HCT116 (cell line): ENCODE measurements at regions of chr13 and their contacts with region 1.

Region 1: DNA sequence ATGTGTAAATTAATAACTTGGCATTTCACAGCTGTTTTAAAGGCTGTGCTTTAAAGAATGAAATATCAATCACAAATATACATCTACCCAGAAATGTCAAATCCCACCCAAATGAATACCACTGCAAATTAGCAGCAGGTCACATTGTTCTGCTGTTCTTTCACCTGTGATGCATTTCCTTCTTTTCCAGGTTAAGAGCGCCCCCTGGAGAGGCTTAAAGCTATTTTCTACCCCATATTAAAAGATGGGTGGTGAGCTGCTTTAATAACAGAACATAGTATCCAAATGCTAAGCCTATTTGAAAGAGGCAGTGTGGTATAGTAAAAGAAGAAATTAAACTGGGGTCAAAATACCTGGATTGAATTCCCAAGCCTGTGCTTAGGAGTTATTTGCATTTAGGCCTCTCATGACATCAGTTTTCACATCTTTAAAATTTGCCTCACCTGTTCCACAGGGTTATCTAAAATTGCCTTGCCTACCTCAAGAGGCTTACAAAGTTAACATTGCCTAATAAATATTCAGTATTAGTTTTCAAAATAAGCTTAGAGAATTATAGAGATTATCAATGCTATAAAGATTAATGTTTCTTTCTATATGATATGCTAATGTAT is 396.9 kb upstream of the SLITRK5 start:
- DNase-seq: peak; percentile 39
- ATAC-seq: peak; percentile 70
- H3K4me3 ChIP-seq: no peak overlapping the region
- H3K27ac ChIP-seq: no peak overlapping the region
- H3K4me1 ChIP-seq: no peaks in the 10 kb centered on the region
- H3K27me3 ChIP-seq: no peaks in the 10 kb centered on the region
- CTCF ChIP-seq: peak; percentile 32 to 57 (median 56); a peak in 5 of 6 replicates
- POLR2A ChIP-seq: no peak
- RAD21 ChIP-seq: peak; percentile 60

Region 2: DNA sequence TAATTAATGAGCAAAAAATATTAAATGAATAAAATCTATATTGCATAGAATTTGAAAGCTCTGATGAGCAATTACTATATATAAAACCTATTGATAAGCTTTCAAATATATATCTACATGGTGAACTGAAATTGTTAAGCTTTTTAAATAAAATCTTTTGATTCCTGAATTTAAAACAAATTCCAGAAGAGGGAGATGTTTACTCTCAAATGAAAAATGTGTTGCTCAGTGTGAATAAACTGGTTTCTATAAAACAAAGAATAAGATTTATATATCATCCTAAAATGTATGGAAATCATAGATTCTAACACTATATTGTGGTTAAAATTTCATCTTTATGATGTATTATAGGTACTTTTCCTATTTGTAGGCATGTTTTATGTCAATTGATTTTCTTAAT is 1303.6 kb before region 1 on chr13:
- CTCF ChIA-PET with region 1: no interaction called
- POLR2A ChIA-PET with region 1: no interaction called
- RAD21 ChIA-PET with region 1: no interaction called
- intact Hi-C with region 1: loop called (anchors 10 kb)
- DNase-seq: no peak
- ATAC-seq: no peak
- H3K4me3 ChIP-seq: no peak overlapping the region
- H3K27ac ChIP-seq: no peak overlapping the region
- H3K4me1 ChIP-seq: peaks cover 0 to 12% of the 10 kb centered on the region in 2 experiments; a peak in 2 of 4 replicates
- H3K27me3 ChIP-seq: no peaks in the 10 kb centered on the region
- CTCF ChIP-seq: no peak; a peak in 1 of 6 replicates
- POLR2A ChIP-seq: no peak
- RAD21 ChIP-seq: peak; percentile 29; the same call in 1 of the 2 replicates

Region 3: DNA sequence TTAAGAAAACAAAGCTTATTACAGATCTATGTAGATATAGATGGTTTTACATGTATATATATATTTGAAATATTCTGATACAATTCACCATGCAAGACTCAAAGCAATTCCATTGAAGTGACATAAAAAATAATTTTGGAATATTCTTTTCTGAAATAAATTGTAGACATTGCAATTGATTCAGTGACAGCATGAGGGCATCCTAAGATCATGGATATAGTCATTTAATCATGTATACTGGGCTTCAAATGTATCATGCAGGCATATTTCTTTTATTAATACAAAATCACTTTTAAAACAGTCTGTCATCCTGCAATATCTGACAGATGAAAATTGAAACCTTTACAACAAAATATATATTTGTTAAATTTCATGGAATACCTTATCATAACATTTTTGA is 1188.4 kb before region 1 on chr13:
- CTCF ChIA-PET with region 1: no interaction called
- POLR2A ChIA-PET with region 1: no interaction called
- RAD21 ChIA-PET with region 1: no interaction called
- intact Hi-C with region 1: loop called (anchors 5 kb)
- DNase-seq: no peak
- ATAC-seq: no peak
- H3K4me3 ChIP-seq: no peak overlapping the region
- H3K27ac ChIP-seq: no peak overlapping the region
- H3K4me1 ChIP-seq: no peaks in the 10 kb centered on the region
- H3K27me3 ChIP-seq: no peaks in the 10 kb centered on the region
- CTCF ChIP-seq: 0 out of 6 replicates have a peak, but pooled peaks of 1 of the 3 experiments have one; percentile 3
- POLR2A ChIP-seq: no peak
- RAD21 ChIP-seq: peak; percentile 31

Region 4: GRCh38 chr13:86870444-86870843 is 403.9 kb before region 1 on chr13:
- CTCF ChIA-PET with region 1: interaction called, 24 read pairs
- POLR2A ChIA-PET with region 1: no interaction called
- RAD21 ChIA-PET with region 1: interaction called in 1 of 2 experiments, 3 read pairs
- intact Hi-C with region 1: loop called (anchors 1 kb)
- DNase-seq: no peak
- ATAC-seq: no peak
- H3K4me3 ChIP-seq: no peak overlapping the region
- H3K27ac ChIP-seq: no peak overlapping the region
- H3K4me1 ChIP-seq: no peaks in the 10 kb centered on the region
- H3K27me3 ChIP-seq: no peaks in the 10 kb centered on the region
- CTCF ChIP-seq: peak; percentile 30 to 66 (median 32); a peak in 4 of 6 replicates
- POLR2A ChIP-seq: no peak
- RAD21 ChIP-seq: peak; percentile 53

Region 5: GRCh38 chr13:87078947-87079795 is 195.1 kb before region 1 on chr13:
- CTCF ChIA-PET with region 1: no interaction called
- POLR2A ChIA-PET with region 1: no interaction called
- RAD21 ChIA-PET with region 1: no interaction called
- intact Hi-C with region 1: no loop called
- DNase-seq: no peak
- ATAC-seq: no peak
- H3K4me3 ChIP-seq: no peak overlapping the region
- H3K27ac ChIP-seq: no peak overlapping the region
- H3K4me1 ChIP-seq: no peaks in the 10 kb centered on the region
- H3K27me3 ChIP-seq: no peaks in the 10 kb centered on the region
- CTCF ChIP-seq: no peak
- POLR2A ChIP-seq: no peak
- RAD21 ChIP-seq: no peak

Region 6: GRCh38 chr13:87669379-87670125 is 395.2 kb after region 1 on chr13:
- CTCF ChIA-PET with region 1: no interaction called
- POLR2A ChIA-PET with region 1: no interaction called
- RAD21 ChIA-PET with region 1: no interaction called
- intact Hi-C with region 1: loop called (anchors 10 kb)
- DNase-seq: no peak
- ATAC-seq: peak; percentile 61
- H3K4me3 ChIP-seq: no peak overlapping the region
- H3K27ac ChIP-seq: no peak overlapping the region
- H3K4me1 ChIP-seq: no peaks in the 10 kb centered on the region
- H3K27me3 ChIP-seq: no peaks in the 10 kb centered on the region
- CTCF ChIP-seq: peak in 2 of 3 experiments; percentile 55 to 65; a peak in 5 of 6 replicates
- POLR2A ChIP-seq: no peak
- RAD21 ChIP-seq: peak; percentile 47